CD4-positive, alpha-beta memory T cell (primary cell): ENCODE measurements at regions of chr12 and their contacts with region 1.

Region 1: DNA sequence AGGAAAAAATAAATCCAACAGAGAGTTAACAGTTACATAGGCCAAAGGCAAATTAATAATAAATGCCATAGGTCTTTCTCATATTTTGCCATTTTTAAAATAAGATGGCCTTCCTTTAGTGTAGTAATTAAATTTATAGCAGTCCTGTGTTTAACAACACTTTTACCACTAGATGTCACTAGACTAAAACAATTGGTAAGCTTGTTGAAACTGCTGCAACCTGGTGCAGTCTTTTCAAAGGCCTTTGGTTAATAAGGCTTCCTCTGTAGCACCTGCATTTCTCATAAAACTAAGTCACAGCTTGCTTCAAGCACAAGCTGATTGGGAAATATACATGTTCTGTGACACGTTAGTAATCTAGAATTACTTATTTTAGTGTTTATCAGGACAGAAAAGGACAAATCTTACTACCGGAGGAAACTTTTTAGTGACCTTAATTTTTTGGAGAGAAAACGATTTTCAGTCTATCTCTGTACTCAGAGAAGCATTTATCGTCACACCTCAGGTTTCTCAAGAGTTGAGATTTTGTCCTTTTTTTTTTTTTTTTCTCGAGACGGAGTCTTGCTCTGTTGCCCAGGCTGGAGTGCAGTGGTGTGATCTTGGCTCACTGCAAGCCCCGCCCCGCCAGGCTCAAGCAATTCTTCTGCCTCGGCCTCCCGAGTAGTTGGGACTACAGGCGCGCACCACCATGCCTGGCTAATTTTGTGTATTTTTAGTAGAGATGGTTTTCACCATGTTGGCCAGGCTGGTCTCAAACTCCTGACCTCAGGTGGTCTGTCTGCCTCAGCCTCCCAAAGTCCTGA is 20.0 kb downstream of the BORCS5 start:
- DNase-seq: peak; percentile 62 to 82 (median 81)
- H3K4me3 ChIP-seq: no peak overlapping the region
- H3K4me3 Mint-ChIP-seq: peak overlapping the region in 1 of 8 donors; percentile 41
- H3K27ac ChIP-seq: peak overlapping the region; percentile 23
- H3K27ac Mint-ChIP-seq: peak overlapping the region; percentile 52 to 99 (median 91)
- H3K4me1 ChIP-seq: peaks cover 50% of the 10 kb centered on the region
- H3K4me1 Mint-ChIP-seq: peaks cover 36 to 48% (median 43%) of the 10 kb centered on the region in 4 donors
- H3K27me3 ChIP-seq: no peaks in the 10 kb centered on the region
- H3K27me3 Mint-ChIP-seq: no peaks in the 10 kb centered on the region

Region 2: DNA sequence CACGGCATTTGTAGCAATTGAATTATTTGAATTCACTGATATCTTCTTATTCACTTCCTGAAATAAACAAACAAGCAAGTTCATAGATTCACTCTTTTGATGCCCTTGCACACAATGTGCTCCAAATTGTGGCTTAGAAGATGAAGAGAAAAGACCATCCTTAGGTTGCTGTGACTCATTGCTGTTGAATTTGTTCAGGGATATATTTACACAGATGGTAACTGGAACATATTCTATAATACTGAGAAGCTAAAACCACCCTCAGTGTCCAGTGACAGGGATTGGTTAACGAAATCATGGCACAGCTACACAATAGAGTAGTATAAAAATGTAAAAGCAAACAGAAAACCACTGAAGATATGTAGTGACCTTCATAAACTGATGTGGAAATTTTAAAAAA is 1069.7 kb before region 1 on chr12:
- CTCF ChIA-PET with region 1: no interaction called
- POLR2A ChIA-PET with region 1: no interaction called
- intact Hi-C with region 1: no loop called
- DNase-seq: no peak
- H3K4me3 ChIP-seq: no peak overlapping the region
- H3K4me3 Mint-ChIP-seq: no peak overlapping the region
- H3K27ac ChIP-seq: no peak overlapping the region
- H3K27ac Mint-ChIP-seq: no peak overlapping the region
- H3K4me1 ChIP-seq: no peaks in the 10 kb centered on the region
- H3K4me1 Mint-ChIP-seq: no peaks in the 10 kb centered on the region
- H3K27me3 ChIP-seq: no peaks in the 10 kb centered on the region
- H3K27me3 Mint-ChIP-seq: no peaks in the 10 kb centered on the region

Region 3: DNA sequence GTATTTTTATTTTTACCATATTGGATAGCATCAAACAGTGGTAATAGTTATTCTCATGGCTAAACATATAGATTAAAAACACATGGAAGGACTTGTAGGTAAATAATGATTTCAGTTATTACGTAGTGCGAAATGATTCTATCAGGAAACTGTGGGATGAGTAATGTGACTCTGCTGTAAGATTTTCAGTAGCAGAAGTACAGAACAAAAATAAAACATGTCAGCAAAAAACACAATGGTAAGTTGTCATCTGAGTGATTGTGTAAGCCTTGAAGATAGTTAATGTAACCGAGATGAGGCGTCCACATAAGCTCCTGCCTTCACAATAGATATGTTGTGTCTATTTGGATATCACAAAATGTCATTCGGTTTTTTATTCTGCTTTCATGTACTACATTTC is 79.8 kb after region 1 on chr12:
- CTCF ChIA-PET with region 1: interaction called, 5 read pairs
- POLR2A ChIA-PET with region 1: interaction called, 16 read pairs
- intact Hi-C with region 1: no loop called
- DNase-seq: peak in 4 of 5 donors; percentile 54 to 72 (median 54)
- H3K4me3 ChIP-seq: peak overlapping the region in 1 of 2 donors; percentile 27
- H3K4me3 Mint-ChIP-seq: peak overlapping the region; percentile 23 to 78 (median 66)
- H3K27ac ChIP-seq: peak overlapping the region; percentile 65
- H3K27ac Mint-ChIP-seq: peak overlapping the region; percentile 78 to 97 (median 92)
- H3K4me1 ChIP-seq: peaks cover 40% of the 10 kb centered on the region
- H3K4me1 Mint-ChIP-seq: peaks cover 21 to 60% (median 45%) of the 10 kb centered on the region in 4 donors
- H3K27me3 ChIP-seq: no peaks in the 10 kb centered on the region
- H3K27me3 Mint-ChIP-seq: no peaks in the 10 kb centered on the region

Region 4: DNA sequence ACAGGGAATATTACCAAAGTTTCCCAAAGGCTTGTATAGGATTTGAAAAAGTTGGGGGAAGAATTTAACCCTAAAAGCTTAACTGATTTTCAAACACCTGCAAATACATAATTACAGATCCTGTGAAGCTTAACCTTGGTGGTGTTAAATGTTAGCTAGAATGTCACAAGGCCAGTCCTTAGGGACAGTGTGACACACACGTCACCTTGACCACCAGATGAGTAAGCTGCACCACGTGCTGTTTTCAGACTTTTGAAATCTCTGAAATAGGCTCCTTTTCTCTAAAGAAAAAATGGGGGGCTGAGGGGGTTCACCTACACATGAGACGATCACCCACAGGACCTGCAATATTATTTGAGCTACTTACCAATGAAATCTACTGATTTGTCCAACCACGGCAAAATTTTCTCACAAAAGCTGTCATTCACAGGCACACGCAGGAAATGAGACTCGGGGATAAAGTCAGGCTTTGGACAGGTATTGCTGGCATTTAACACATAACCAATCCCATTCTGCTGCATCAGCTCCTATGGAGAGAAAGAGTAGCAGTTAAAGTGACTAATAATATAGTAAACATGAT is 109.9 kb after region 1 on chr12:
- CTCF ChIA-PET with region 1: interaction called, 41 read pairs
- POLR2A ChIA-PET with region 1: interaction called, 107 read pairs
- intact Hi-C with region 1: loop called (anchors 1 kb)
- DNase-seq: no peak
- H3K4me3 ChIP-seq: no peak overlapping the region
- H3K4me3 Mint-ChIP-seq: peak overlapping the region in 6 of 8 donors; percentile 14 to 65 (median 28)
- H3K27ac ChIP-seq: peak overlapping the region; percentile 40
- H3K27ac Mint-ChIP-seq: peak overlapping the region; percentile 84 to 99 (median 92)
- H3K4me1 ChIP-seq: peaks cover 78% of the 10 kb centered on the region
- H3K4me1 Mint-ChIP-seq: peaks cover 36 to 70% (median 56%) of the 10 kb centered on the region in 4 donors
- H3K27me3 ChIP-seq: no peaks in the 10 kb centered on the region
- H3K27me3 Mint-ChIP-seq: no peaks in the 10 kb centered on the region

Region 5: DNA sequence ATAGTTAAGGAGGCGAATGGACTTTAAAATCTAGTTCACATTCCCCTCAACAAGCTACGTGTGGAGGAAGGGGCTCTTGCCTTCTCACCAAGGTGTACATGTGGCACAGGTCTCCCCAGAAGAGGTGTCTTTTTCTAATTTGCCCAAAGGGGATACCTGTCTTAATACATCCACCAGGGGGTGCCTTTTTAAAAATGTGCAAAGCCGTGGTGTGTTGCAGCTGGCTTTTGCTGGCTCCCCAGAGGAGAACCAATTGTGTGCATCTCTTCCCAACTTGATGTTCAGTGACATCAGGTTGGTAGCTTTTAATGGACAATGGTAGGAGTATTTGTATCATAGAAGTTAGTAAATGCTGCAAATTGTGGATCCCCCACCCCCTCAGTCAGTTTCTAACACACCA is 268.6 kb after region 1 on chr12:
- CTCF ChIA-PET with region 1: interaction called, 5 read pairs
- POLR2A ChIA-PET with region 1: interaction called, 3 read pairs
- intact Hi-C with region 1: loop called (anchors 1 kb)
- DNase-seq: peak; percentile 52 to 70 (median 65)
- H3K4me3 ChIP-seq: no peak overlapping the region
- H3K4me3 Mint-ChIP-seq: no peak overlapping the region
- H3K27ac ChIP-seq: no peak overlapping the region
- H3K27ac Mint-ChIP-seq: peak overlapping the region in 5 of 7 donors; percentile 36 to 77 (median 55)
- H3K4me1 ChIP-seq: no peaks in the 10 kb centered on the region
- H3K4me1 Mint-ChIP-seq: peaks cover 6 to 11% (median 7%) of the 10 kb centered on the region in 4 donors
- H3K27me3 ChIP-seq: no peaks in the 10 kb centered on the region
- H3K27me3 Mint-ChIP-seq: no peaks in the 10 kb centered on the region

Region 6: DNA sequence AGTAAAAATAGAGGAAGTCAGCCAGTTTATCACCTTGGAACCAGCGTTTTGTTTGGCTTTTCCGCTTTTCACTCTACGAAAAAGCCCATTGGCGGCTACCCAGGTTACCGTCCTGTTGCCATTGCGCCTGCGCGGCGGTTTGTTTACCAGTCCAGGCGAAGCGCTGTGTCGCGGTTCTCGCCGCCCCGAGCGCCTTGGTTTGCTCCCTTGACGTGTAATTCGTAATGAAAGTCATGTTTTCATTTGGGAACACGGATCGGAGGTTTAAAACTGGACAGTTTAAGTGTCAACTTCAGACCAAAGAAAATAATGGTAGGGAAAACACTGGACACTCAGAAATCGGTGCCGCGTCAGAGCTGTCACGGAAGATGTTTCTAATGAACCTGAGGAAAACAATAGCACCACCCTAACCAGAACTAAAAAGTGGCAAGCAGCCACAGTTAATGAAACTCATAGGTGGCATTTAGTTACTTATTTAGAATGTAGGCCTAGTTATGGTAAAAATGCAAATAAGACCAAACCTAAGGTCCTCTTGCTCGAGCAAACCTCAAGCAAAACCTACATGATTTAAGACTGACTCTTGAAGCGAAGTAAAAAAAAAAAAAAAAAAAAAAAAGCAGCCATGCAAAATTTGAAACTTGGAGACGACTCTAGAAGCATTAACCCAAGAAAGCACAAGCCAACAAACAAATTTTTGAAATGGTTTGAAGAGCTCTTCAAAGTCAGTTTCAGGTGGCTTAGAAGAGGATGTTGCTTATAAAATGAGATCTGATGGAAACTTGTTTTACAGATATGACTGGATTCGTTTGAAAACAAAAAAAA is 319.9 kb after region 1 on chr12:
- CTCF ChIA-PET with region 1: interaction called, 3 read pairs
- POLR2A ChIA-PET with region 1: interaction called, 12 read pairs
- intact Hi-C with region 1: no loop called
- DNase-seq: peak; percentile 93 to 96 (median 95)
- H3K4me3 ChIP-seq: peak overlapping the region; percentile 37 to 74
- H3K4me3 Mint-ChIP-seq: peak overlapping the region; percentile 86 to 97 (median 94)
- H3K27ac ChIP-seq: peak overlapping the region; percentile 87
- H3K27ac Mint-ChIP-seq: peak overlapping the region; percentile 98 to 100 (median 100)
- H3K4me1 ChIP-seq: peaks cover 24% of the 10 kb centered on the region
- H3K4me1 Mint-ChIP-seq: peaks cover 16 to 41% (median 30%) of the 10 kb centered on the region in 4 donors
- H3K27me3 ChIP-seq: no peaks in the 10 kb centered on the region
- H3K27me3 Mint-ChIP-seq: no peaks in the 10 kb centered on the region

Region 7: DNA sequence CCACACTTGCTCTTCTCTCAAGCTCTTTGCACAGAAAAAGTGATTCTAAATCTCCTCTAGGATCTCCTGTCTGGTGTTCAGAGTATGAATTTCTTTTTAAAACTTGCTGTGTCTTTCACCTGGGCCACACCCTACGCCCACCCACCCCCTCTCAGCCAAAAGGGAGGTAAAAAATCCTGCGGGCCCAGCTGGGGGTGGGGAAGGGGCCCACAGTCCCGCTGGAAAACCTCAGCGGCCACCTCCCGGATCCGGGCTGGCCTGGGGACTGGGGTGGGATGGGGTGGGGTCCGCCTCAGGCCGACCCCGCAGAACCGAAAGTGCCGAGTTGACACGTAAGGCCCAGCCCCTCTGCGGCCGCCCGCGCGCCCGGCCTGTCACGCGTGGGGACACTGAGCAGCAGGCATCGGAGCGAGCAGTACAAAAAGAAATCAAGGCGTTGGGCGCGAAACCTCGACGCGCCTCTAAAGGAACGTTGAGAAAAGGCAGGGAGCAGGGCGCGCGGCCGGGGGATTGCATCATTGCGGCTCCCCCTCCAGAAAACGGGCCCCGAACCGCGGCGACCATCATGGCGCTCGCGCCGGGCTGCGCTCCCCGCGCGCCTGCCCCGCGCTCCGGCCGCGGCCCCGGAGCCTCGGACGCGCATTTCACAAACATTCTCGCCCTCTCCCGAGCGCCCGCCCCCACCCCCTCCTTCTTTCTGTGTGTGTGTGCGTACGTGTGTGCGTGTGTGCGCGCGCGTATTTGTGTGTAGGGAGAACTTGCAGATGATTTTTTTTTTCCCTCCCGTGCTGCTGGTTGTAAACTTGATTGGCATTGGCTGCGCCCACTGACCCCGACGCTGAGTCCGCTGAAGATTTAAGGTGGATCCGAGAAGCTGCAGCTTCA is 348.1 kb after region 1 on chr12:
- CTCF ChIA-PET with region 1: interaction called, 5 read pairs
- POLR2A ChIA-PET with region 1: interaction called, 18 read pairs
- intact Hi-C with region 1: loop called (anchors 2 kb)
- DNase-seq: peak; percentile 93 to 97 (median 96)
- H3K4me3 ChIP-seq: peak overlapping the region in 1 of 2 donors; percentile 80
- H3K4me3 Mint-ChIP-seq: peak overlapping the region; percentile 89 to 96 (median 92)
- H3K27ac ChIP-seq: peak overlapping the region; percentile 95
- H3K27ac Mint-ChIP-seq: peak overlapping the region; percentile 95 to 99 (median 97)
- H3K4me1 ChIP-seq: peaks cover 56% of the 10 kb centered on the region
- H3K4me1 Mint-ChIP-seq: peaks cover 37 to 72% (median 43%) of the 10 kb centered on the region in 4 donors
- H3K27me3 ChIP-seq: no peaks in the 10 kb centered on the region
- H3K27me3 Mint-ChIP-seq: peaks cover 0 to 1% of the 10 kb centered on the region in 2 donors